Left cardiac atrium (tissue), 4 donors: ENCODE measurements at regions of chr3 and their contacts with region 1.

Region 1: GRCh38 chr3:101809178-101810021 is 30.4 kb downstream of the NXPE3 start:
- DNase-seq: no peak
- ATAC-seq: peak; percentile 32 to 33

Region 2: DNA sequence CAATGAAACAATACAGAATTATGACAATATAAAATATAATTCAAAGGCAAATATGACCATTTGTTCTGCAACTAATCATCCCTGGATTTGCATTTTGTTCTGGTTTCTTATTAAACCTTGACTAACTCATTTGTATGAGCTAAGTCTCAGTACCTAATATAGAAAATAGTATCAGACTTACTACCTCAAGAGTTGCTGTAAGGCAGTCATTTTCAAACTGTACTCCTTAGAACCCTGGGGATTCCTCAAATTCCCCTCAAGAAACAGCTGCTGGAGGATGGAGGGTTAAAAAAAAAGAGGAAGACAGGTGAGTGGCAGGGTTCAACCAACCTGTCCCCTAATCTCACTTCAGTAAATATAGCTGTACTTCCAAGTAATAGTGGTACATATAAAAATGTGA is 143.5 kb before region 1 on chr3:
- intact Hi-C with region 1: no loop called
- DNase-seq: no peak
- ATAC-seq: no peak

Region 3: DNA sequence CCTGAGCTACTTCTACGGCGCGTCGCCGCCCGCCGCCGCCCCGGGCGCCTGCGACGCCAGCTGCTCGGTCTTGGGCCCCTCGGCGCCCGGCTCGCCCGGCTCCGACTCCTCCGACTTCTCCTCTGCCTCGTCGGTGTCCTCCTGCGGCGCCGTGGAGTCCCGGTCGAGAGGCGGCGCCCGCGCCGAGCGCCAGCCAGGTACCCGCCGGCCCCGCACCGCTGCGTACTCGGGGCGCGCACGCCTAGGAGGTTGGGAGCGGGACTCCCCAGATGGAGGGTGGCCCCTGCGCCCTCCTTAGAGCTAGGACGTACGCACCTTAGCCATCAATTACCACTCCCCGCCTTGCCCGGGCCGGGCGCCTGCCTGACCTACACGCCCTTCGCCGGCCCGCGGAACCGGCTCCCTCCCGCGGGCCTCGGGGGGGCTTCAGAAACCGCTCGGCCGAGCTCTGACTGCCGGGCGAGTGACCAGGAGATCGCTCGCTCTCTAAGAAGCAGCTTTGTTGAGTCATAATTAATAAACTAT is 40.4 kb after region 1 on chr3:
- intact Hi-C with region 1: loop called in 1 of 2 experiments (anchors 5 kb)
- DNase-seq: peak; percentile 56
- ATAC-seq: peak; percentile 45 to 48

Region 4: GRCh38 chr3:102206511-102207031 is 397.2 kb after region 1 on chr3:
- intact Hi-C with region 1: loop called in 1 of 2 experiments (anchors 5 kb)
- DNase-seq: peak; percentile 79
- ATAC-seq: peak; percentile 96